Activated CD8-positive, alpha-beta memory T cell treated with anti-CD3 and anti-CD28 coated beads, Interleukin-2, amount 10 ng/mL, durations not matched to agents 7 days and 5 days (primary cell): ENCODE measurements at regions of chr6 and their contacts with region 1.

Region 1: GRCh38 chr6:16514249-16514648 is 247.0 kb downstream of the ATXN1 start:
- DNase-seq: peak; percentile 53
- ATAC-seq: peak; percentile 52
- H3K4me3 Mint-ChIP-seq: no peak overlapping the region
- H3K27ac Mint-ChIP-seq: peak overlapping the region; percentile 41
- H3K4me1 Mint-ChIP-seq: peaks cover 73% of the 10 kb centered on the region
- H3K27me3 Mint-ChIP-seq: no peaks in the 10 kb centered on the region

Region 2: GRCh38 chr6:15245361-15246216 is 1268.7 kb before region 1 on chr6 and contains the start of gene JARID2:
- CTCF ChIA-PET with region 1: no interaction called
- DNase-seq: peak; percentile 98
- ATAC-seq: peak; percentile 57
- H3K4me3 Mint-ChIP-seq: peak within 1 kb of the TSS; percentile 93
- H3K27ac Mint-ChIP-seq: peak within 1 kb of the TSS; percentile 99
- H3K4me1 Mint-ChIP-seq: peaks cover 22% of the 10 kb centered on the region
- H3K27me3 Mint-ChIP-seq: no peaks in the 10 kb centered on the region
- total RNA-seq, gene JARID2: 30.0 to 42.4 TPM

Region 3: GRCh38 chr6:16332175-16332542 is 182.1 kb before region 1 on chr6:
- CTCF ChIA-PET with region 1: interaction called, 24 read pairs
- DNase-seq: peak; percentile 86
- ATAC-seq: peak; percentile 90
- H3K4me3 Mint-ChIP-seq: no peak overlapping the region
- H3K27ac Mint-ChIP-seq: no peak overlapping the region
- H3K4me1 Mint-ChIP-seq: peaks cover 7% of the 10 kb centered on the region
- H3K27me3 Mint-ChIP-seq: no peaks in the 10 kb centered on the region

Region 4: DNA sequence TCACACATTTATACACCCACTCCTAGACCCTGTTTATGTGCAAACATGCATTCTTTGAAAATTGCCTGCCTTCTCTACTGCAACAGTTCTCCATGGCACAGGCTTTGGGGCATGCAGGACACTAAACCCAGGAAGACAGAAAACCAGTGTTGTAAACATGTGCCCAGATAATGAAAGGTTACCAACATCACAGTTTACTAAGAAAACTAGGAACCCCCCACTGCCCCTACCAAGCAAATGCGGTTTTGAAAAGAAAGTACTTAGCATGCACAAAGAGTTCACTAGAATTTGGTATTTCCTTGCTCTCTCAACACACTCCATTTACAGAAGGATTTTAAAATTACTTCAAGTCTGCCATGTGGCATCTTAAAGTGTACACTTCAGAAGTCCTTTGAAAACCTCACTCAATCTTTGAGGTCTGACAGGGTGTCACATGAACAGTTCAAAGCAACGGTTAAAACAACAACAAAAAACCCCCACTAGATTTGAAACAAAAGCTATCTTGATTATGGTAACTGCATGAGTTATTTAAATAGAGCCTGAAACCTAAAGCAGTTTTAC is 30.9 kb before region 1 on chr6:
- CTCF ChIA-PET with region 1: interaction called, 16 read pairs
- DNase-seq: peak; percentile 56
- ATAC-seq: peak; percentile 31
- H3K4me3 Mint-ChIP-seq: peak overlapping the region; percentile 39
- H3K27ac Mint-ChIP-seq: peak overlapping the region; percentile 91
- H3K4me1 Mint-ChIP-seq: peaks cover 89% of the 10 kb centered on the region
- H3K27me3 Mint-ChIP-seq: no peaks in the 10 kb centered on the region

Region 5: DNA sequence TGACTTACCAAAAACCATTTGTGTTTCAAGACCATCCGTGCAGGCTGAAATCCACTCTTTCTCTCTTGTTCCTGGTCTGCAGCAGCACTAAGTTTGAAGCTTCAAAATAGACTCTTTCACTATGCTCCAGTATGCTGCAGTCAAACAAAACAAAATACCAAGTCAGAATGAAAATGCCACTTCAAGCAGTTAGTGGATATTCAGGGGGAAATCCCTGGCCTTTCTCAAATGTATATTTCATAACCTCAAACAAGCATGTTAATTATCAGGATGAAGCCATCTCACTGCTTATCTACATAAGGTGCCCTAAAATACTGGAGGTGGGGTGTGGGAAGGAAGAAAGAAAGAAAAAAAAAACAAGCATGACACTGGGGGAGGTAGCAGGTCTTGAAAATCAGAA is 143.5 kb after region 1 on chr6:
- CTCF ChIA-PET with region 1: interaction called, 11 read pairs
- DNase-seq: no peak
- ATAC-seq: peak; percentile 47
- H3K4me3 Mint-ChIP-seq: peak overlapping the region; percentile 53
- H3K27ac Mint-ChIP-seq: peak overlapping the region; percentile 85
- H3K4me1 Mint-ChIP-seq: peaks cover 70% of the 10 kb centered on the region
- H3K27me3 Mint-ChIP-seq: no peaks in the 10 kb centered on the region